A549 (cell line): ENCODE measurements at regions of chr19 and their contacts with region 1.

Region 1: DNA sequence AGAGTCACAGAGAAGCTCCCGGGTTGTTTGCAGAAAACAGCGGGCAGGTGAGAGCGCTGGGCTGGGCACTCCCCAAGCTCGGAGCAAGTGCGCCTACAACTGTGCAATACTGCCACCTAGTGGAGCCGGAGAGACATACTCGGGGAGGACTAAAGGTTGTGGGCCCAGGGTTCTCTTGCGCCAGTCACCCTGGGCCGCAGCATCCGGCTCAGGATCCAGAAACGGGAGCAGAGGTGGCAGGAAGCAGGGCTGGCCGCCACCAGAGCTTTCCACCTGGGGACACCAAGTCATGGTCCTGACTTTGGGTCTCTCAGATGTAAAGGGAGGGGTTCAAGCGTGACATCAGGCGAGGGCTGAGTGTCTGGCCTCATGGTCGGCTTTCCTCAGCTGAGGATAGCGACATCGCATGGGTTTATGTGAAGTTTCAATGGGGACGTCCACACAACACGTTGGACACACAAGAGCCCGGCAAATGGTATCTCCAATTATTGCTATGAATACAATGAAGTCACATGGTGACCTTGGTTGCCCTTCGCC is 11.2 kb upstream of the KLK4 start:
- DNase-seq: peak; percentile 89 to 91
- ATAC-seq: peak; percentile 97 to 100
- H3K4me3 ChIP-seq: no peak overlapping the region
- H3K27ac ChIP-seq: no peak overlapping the region
- H3K4me1 ChIP-seq: peaks cover 14% of the 10 kb centered on the region; the same call in 1 of the 3 replicates
- CTCF ChIP-seq: peak; percentile 96
- EP300 ChIP-seq: no peak
- POLR2A ChIP-seq: no peak
- RAD21 ChIP-seq: peak; percentile 95 to 97

Region 2: DNA sequence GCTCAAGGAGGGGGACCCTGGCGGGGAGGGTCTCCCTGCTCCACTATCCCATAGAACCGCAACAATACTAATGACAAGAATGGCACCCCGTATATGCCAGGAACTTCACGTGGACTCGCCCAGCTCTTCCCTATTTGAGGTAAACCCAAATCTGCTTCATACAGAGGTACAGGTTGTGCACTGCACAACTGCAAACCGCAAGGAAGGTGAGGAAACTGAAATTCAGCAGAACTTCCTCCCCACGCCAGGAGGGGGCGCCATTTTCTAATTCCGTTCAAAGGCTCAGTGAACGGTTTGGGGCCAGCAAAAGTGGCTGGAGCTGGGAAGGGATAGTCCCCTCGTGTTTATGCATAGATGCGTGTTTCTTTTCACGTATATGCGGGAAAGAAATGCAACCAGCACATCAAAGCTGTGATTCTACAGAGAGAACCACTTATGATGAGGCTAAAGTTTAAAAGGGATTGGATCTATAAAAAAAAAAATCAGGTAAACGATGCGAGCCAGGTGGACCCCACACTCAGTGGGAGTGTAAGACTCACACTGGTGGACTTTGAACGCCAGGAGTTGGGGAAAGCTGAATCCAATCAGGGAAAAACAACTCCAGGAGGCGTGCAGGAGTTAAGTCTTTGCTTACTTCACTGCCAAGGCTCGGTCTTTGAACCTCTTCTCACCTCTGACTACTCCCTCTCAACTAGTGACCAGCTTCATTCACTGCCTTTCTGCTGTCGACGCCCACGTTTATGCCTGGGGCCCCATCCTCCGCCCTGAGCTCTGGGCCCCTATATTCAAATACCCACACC is 252.9 kb before region 1 on chr19:
- CTCF ChIA-PET with region 1: interaction called, 18 read pairs
- POLR2A ChIA-PET with region 1: no interaction called
- DNase-seq: peak; percentile 61 to 69
- ATAC-seq: peak; percentile 48 to 63; a peak in 5 of 6 replicates
- H3K4me3 ChIP-seq: no peak overlapping the region; the same call in 2 of the 3 replicates
- H3K27ac ChIP-seq: no peak overlapping the region
- H3K4me1 ChIP-seq: peaks cover 23% of the 10 kb centered on the region
- CTCF ChIP-seq: peak; percentile 91
- EP300 ChIP-seq: no peak
- POLR2A ChIP-seq: no peak
- RAD21 ChIP-seq: peak; percentile 53 to 65

Region 3: DNA sequence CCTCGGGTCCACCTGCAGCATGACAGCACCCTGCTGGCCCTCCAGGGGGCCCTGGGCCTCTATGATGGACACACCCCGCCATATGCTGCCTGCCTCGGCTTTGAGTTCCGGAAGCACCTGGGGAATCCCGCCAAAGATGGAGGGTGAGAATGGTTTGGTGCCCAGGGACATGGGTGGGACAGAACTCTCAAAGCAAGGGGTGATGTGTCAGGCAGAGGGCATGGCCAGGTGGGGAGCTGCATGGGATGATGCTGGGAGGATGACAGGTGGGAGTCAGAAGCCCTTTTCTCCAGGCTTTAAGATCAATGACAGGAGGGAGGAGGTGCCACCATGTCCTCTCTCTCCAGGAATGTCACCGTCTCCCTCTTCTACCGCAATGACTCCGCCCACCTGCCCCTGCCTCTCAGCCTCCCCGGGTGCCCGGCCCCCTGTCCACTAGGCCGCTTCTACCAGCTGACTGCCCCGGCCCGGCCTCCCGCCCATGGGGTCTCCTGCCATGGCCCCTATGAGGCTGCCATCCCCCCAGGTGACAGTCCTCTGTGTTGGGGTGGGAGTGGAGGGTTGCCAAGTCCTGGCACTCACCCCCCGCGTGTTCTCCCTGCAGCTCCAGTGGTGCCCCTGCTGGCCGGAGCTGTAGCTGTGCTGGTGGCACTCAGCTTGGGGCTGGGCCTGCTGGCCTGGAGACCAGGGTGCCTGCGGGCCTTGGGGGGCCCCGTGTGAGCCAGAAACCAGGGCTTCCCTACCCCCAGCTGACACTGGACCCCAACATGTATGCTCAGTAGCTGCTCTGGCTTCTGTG is 127.7 kb before region 1 on chr19:
- CTCF ChIA-PET with region 1: interaction called, 121 read pairs
- POLR2A ChIA-PET with region 1: interaction called, 10 read pairs
- DNase-seq: peak; percentile 67 to 76
- ATAC-seq: peak; percentile 31 to 62
- H3K4me3 ChIP-seq: no peak overlapping the region
- H3K27ac ChIP-seq: no peak overlapping the region
- H3K4me1 ChIP-seq: peaks cover 9% of the 10 kb centered on the region; the same call in 2 of the 3 replicates
- CTCF ChIP-seq: no peak; the same call in 2 of the 3 replicates
- EP300 ChIP-seq: no peak
- POLR2A ChIP-seq: peak; percentile 42
- RAD21 ChIP-seq: no peak

Region 4: DNA sequence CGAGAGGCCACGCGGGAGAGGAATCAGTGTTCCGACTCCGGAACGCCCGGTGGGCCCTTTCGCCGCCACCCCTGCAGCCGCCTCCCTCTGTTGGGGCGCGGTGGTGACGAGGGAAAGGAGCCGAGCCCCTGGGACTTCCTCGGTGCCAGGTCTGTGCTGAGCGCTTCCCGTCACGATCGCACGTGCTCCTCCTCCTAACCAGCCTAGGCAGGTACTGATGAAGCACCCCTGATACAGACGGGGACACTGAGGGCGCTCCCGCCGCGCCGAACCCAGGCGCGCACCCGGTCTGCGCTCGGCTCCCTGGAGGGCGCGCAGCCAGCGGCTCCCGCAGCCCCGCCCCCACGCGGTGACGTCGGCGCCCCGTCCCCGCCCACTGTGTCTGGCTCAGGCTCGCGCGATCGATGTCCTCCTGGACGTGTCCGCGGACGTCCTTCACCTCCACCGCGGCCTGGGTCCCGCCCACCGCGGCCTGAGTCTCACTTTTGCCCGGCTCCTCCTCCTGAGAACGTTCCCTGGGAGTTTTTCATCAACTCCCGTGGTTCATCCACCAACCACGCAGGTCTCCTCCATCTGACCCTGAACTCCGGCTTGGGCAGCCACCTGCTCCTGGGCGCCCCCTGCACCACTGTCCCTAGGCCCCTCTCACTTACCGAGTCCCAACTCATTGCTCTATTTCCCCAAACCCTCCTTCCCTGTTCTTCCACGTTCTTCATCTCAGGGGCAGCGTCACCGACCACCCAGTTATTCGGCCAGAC is 86.4 kb before region 1 on chr19:
- CTCF ChIA-PET with region 1: interaction called, 39 read pairs
- POLR2A ChIA-PET with region 1: no interaction called
- DNase-seq: peak; percentile 83 to 95
- ATAC-seq: peak; percentile 83 to 96
- H3K4me3 ChIP-seq: peak overlapping the region; percentile 56
- H3K27ac ChIP-seq: peak overlapping the region; percentile 64 to 83
- H3K4me1 ChIP-seq: peaks cover 9% of the 10 kb centered on the region; the same call in 1 of the 3 replicates
- CTCF ChIP-seq: no peak; the same call in 2 of the 3 replicates
- EP300 ChIP-seq: no peak
- POLR2A ChIP-seq: peak; percentile 97
- RAD21 ChIP-seq: no peak

Region 5: DNA sequence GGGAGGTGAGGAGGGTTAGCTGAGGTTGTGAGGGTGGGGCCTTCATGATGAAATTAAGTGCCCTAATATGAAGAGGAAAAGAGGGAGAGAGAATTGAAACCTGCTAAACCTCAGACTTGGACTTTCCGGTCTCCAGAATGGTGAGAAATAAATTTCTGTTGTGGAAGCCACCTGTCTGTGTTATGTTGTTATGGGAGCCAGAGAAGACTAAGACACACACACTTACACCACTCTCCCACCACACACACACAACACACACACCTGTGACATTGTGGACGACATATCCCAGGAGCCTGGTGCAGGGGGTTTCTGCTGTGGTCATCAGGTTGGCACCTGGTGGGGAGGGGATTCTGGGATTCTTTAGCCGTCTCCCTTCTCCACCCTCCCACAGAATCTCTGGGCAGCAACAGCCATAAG is 25.2 kb before region 1 on chr19:
- CTCF ChIA-PET with region 1: interaction called, 26 read pairs
- POLR2A ChIA-PET with region 1: no interaction called
- DNase-seq: no peak
- ATAC-seq: 0 out of 6 replicates have a peak, but pooled peaks of 1 of the 2 experiments have one; percentile 10
- H3K4me3 ChIP-seq: no peak overlapping the region
- H3K27ac ChIP-seq: no peak overlapping the region; a peak in 1 of 6 replicates
- H3K4me1 ChIP-seq: peaks cover 6% of the 10 kb centered on the region; the same call in 1 of the 3 replicates
- CTCF ChIP-seq: no peak
- EP300 ChIP-seq: no peak
- POLR2A ChIP-seq: no peak
- RAD21 ChIP-seq: no peak

Region 6: DNA sequence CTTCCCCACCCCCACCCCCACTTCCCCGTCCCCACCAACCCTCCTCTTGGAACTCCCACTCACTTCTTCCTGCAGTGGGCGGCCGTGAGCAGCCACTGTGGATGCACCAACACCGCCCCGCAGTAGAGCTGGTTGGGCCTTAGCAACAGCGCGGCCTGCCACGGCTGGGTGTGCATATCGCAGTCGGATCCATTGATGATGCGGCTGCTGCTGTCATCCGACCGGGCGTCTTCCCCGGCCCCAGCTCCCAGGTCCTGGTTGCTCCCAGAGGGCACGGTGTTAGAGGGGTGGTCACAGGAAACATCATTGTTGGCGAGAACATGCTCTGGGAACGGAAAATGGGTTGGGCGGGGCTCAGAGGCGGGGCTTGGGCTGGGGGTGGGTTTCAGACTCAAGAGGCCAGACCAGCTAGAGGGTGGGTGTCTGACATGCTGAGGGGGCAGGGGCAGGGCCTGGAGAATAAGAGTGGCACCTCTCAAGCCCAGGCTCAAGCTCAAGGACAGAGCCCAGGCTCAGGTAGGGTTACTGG is 27.5 kb after region 1 on chr19:
- CTCF ChIA-PET with region 1: interaction called, 11 read pairs
- POLR2A ChIA-PET with region 1: no interaction called
- DNase-seq: no peak
- ATAC-seq: no peak
- H3K4me3 ChIP-seq: no peak overlapping the region
- H3K27ac ChIP-seq: no peak overlapping the region
- H3K4me1 ChIP-seq: no peaks in the 10 kb centered on the region
- CTCF ChIP-seq: no peak
- EP300 ChIP-seq: no peak
- POLR2A ChIP-seq: no peak
- RAD21 ChIP-seq: no peak

Region 7: DNA sequence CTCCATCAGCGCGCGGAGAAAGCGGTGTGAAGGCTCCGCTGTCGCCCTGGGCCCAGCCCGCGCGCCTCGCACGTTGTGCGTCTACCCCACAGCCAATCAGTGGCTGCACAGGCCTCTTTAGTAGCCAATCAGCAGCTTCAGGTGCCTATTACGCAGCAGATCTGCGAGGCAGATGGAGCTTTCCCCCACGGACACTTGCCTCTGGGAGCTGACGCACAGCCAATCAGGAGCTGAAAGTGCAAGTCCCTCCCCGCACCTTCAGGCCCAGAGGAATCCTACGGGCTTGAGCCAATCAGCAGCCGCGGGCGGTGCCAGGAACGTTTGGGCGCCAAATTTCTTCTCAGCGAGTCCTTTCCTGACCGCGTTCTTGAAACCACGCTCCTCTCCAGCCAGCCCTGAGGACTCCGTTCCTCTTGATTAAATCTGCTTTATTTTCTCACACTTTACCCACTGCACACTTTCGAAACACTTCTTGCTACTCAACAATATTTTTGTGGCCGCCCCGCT is 259.6 kb after region 1 on chr19:
- CTCF ChIA-PET with region 1: no interaction called
- POLR2A ChIA-PET with region 1: no interaction called
- DNase-seq: no peak
- ATAC-seq: no peak
- H3K4me3 ChIP-seq: no peak overlapping the region
- H3K27ac ChIP-seq: no peak overlapping the region
- H3K4me1 ChIP-seq: no peaks in the 10 kb centered on the region
- CTCF ChIP-seq: no peak
- EP300 ChIP-seq: no peak
- POLR2A ChIP-seq: no peak
- RAD21 ChIP-seq: no peak

Region 8: DNA sequence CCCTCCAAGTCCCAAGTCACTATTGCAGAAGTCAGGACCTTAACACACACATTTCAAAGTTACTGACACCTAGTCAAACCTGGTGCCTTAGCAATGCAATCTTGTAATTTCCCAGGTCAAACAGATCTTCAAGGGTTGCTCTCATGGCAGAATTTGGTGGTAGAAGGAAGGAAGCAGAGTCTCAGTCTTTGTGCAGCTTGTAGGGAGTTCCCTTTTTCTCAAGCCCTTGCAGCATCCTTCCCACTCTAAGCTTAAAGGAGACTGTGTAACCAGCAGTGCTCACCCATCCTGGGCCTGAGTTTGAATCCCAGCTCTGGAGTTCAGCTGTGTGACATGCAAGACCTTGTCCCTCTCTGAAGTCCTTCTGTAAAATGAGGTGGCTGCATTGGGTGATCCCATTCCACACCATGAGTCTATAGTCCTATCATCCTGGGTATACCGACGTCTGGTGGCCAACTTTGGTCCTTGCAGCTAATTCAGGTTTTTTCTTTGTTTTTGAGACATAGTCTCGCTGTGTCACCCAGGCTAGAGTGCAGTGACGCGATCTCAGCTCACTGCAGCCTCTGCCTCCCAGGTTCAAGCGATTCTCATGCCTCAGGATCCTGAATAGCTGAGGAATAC is 485.2 kb after region 1 on chr19:
- CTCF ChIA-PET with region 1: no interaction called
- POLR2A ChIA-PET with region 1: no interaction called
- DNase-seq: peak; percentile 56 to 72
- ATAC-seq: peak; percentile 82 to 94; a peak in 5 of 6 replicates
- H3K4me3 ChIP-seq: no peak overlapping the region
- H3K27ac ChIP-seq: no peak overlapping the region
- H3K4me1 ChIP-seq: no peaks in the 10 kb centered on the region
- CTCF ChIP-seq: peak; percentile 48; the same call in 2 of the 3 replicates
- EP300 ChIP-seq: no peak
- POLR2A ChIP-seq: no peak
- RAD21 ChIP-seq: peak; percentile 47 to 66; a peak in 4 of 5 replicates